CD8-positive, alpha-beta T cell (primary cell): ENCODE measurements at regions of chr2 and their contacts with region 1.

Region 1: GRCh38 chr2:43131024-43131889 is 95.1 kb downstream of the ZFP36L2 start:
- DNase-seq: peak; percentile 64 to 95 (median 90)
- ATAC-seq: peak; percentile 51
- H3K4me3 ChIP-seq: peak overlapping the region; percentile 12 to 44
- H3K4me3 Mint-ChIP-seq: peak overlapping the region; percentile 60
- H3K27ac ChIP-seq: peak overlapping the region; percentile 88 to 90
- H3K27ac Mint-ChIP-seq: peak overlapping the region; percentile 100
- H3K4me1 ChIP-seq: peaks cover 97% of the 10 kb centered on the region
- H3K4me1 Mint-ChIP-seq: peaks cover 89% of the 10 kb centered on the region
- H3K27me3 ChIP-seq: no peaks in the 10 kb centered on the region
- H3K27me3 Mint-ChIP-seq: no peaks in the 10 kb centered on the region
- CTCF ChIP-seq: peak; percentile 21

Region 2: GRCh38 chr2:42102024-42102590 is 1029.2 kb before region 1 on chr2:
- CTCF ChIA-PET with region 1: no interaction called
- POLR2A ChIA-PET with region 1: no interaction called
- intact Hi-C with region 1: loop called (anchors 10 kb)
- DNase-seq: peak; percentile 84 to 98 (median 92)
- ATAC-seq: peak; percentile 74
- H3K4me3 ChIP-seq: peak overlapping the region; percentile 49 to 53
- H3K4me3 Mint-ChIP-seq: peak overlapping the region; percentile 85
- H3K27ac ChIP-seq: peak overlapping the region; percentile 88 to 97
- H3K27ac Mint-ChIP-seq: no peak overlapping the region
- H3K4me1 ChIP-seq: peaks cover 90% of the 10 kb centered on the region
- H3K4me1 Mint-ChIP-seq: peaks cover 46% of the 10 kb centered on the region
- H3K27me3 ChIP-seq: no peaks in the 10 kb centered on the region
- H3K27me3 Mint-ChIP-seq: no peaks in the 10 kb centered on the region
- CTCF ChIP-seq: no peak

Region 3: GRCh38 chr2:42874949-42875801 is 256.1 kb before region 1 on chr2:
- CTCF ChIA-PET with region 1: no interaction called
- POLR2A ChIA-PET with region 1: no interaction called
- intact Hi-C with region 1: no loop called
- DNase-seq: peak in 1 of 9 experiments; percentile 29
- ATAC-seq: no peak
- H3K4me3 ChIP-seq: no peak overlapping the region
- H3K4me3 Mint-ChIP-seq: no peak overlapping the region
- H3K27ac ChIP-seq: no peak overlapping the region
- H3K27ac Mint-ChIP-seq: no peak overlapping the region
- H3K4me1 ChIP-seq: peaks cover 13% of the 10 kb centered on the region
- H3K4me1 Mint-ChIP-seq: peaks cover 19% of the 10 kb centered on the region
- H3K27me3 ChIP-seq: no peaks in the 10 kb centered on the region
- H3K27me3 Mint-ChIP-seq: no peaks in the 10 kb centered on the region
- CTCF ChIP-seq: no peak

Region 4: DNA sequence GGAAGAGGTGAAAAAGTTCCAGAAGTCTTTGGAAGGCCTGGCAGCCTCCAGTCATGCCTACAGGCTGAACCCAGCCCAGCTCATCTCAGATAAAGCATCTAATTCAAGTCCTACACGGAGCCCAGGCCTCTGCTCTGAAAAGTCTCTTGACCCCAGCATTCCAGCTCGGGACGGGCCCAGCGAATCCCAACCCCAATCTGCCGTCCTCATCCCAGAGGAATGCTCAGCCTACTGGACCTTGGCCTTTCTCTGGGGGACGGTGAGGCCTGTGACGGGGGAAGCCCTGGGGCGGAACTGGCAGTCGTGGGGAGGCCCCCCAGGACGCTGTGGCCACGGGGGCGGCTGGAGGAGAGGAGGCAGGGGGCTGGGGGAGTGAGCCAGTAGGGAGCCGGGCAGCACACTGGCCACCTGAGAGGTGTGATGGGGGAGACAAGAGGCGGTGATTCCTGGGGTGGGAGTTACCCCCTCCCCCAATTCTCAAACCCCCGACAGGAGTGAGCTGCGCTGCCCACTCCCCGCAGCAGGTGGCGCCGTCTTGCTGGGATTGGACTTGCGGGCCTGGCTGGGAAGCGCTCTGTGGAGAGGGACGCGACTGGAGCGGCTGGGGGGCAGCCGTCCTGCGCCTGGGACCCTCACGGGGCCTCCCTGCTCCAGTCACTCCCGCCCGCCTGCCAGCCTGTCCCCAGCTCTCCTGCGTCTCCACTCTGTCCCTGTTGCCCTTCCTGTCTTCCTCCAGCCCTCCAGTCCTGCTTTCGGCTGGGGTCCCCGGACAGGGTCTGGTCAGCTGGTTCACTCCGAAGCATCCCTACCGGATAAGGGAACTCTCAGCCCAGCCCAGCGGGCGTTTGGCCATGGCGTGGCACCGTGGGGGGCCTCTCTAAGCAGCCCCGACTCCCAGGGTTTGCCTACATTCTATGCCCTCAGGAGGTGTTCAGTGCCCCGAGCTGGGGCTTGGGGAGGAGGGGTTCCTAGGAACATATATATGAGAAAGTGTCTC is 156.2 kb before region 1 on chr2:
- CTCF ChIA-PET with region 1: interaction called, 12 read pairs
- POLR2A ChIA-PET with region 1: no interaction called
- intact Hi-C with region 1: loop called in 1 of 2 experiments (anchors 5 kb)
- DNase-seq: peak; percentile 27 to 79 (median 60)
- ATAC-seq: peak; percentile 78
- H3K4me3 ChIP-seq: no peak overlapping the region
- H3K4me3 Mint-ChIP-seq: no peak overlapping the region
- H3K27ac ChIP-seq: no peak overlapping the region
- H3K27ac Mint-ChIP-seq: no peak overlapping the region
- H3K4me1 ChIP-seq: peaks cover 8% of the 10 kb centered on the region
- H3K4me1 Mint-ChIP-seq: peaks cover 15% of the 10 kb centered on the region
- H3K27me3 ChIP-seq: no peaks in the 10 kb centered on the region
- H3K27me3 Mint-ChIP-seq: no peaks in the 10 kb centered on the region
- CTCF ChIP-seq: peak; percentile 71

Region 5: GRCh38 chr2:43003702-43004101 is 127.6 kb before region 1 on chr2:
- CTCF ChIA-PET with region 1: no interaction called
- POLR2A ChIA-PET with region 1: no interaction called
- intact Hi-C with region 1: no loop called
- DNase-seq: no peak
- ATAC-seq: no peak
- H3K4me3 ChIP-seq: no peak overlapping the region
- H3K4me3 Mint-ChIP-seq: no peak overlapping the region
- H3K27ac ChIP-seq: no peak overlapping the region
- H3K27ac Mint-ChIP-seq: no peak overlapping the region
- H3K4me1 ChIP-seq: no peaks in the 10 kb centered on the region
- H3K4me1 Mint-ChIP-seq: no peaks in the 10 kb centered on the region
- H3K27me3 ChIP-seq: no peaks in the 10 kb centered on the region
- H3K27me3 Mint-ChIP-seq: peaks cover 2% of the 10 kb centered on the region
- CTCF ChIP-seq: no peak

Region 6: DNA sequence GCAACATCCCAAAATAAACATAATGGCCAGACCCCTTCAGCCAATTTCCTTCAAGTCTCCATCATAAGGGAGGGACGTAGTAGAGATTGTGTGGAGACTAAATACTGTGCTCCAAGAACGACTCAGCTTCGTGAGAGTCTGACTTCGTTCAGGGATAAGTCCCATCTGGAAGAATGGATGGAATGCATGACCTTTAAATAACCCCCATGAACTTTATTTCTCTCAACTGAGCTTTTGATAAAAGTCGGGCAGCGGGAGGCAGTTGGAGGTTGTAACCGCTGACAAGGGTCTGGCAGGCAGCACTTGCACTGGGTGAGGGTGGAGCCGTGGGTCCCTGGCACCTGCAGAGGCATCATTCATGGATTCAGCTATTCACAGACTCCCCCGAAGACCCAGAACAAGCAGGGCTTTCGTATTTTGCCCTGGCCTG is 20.8 kb before region 1 on chr2:
- CTCF ChIA-PET with region 1: interaction called, 12 read pairs
- POLR2A ChIA-PET with region 1: interaction called, 3 read pairs
- intact Hi-C with region 1: no loop called
- DNase-seq: no peak
- ATAC-seq: no peak
- H3K4me3 ChIP-seq: no peak overlapping the region
- H3K4me3 Mint-ChIP-seq: no peak overlapping the region
- H3K27ac ChIP-seq: no peak overlapping the region
- H3K27ac Mint-ChIP-seq: no peak overlapping the region
- H3K4me1 ChIP-seq: peaks cover 4% of the 10 kb centered on the region
- H3K4me1 Mint-ChIP-seq: peaks cover 37% of the 10 kb centered on the region
- H3K27me3 ChIP-seq: no peaks in the 10 kb centered on the region
- H3K27me3 Mint-ChIP-seq: no peaks in the 10 kb centered on the region
- CTCF ChIP-seq: no peak

Region 7: GRCh38 chr2:43169987-43170386 is 38.7 kb after region 1 on chr2:
- CTCF ChIA-PET with region 1: interaction called, 77 read pairs
- POLR2A ChIA-PET with region 1: interaction called, 245 read pairs
- intact Hi-C with region 1: loop called (anchors 1 to 2 kb)
- DNase-seq: peak; percentile 54 to 86 (median 72)
- ATAC-seq: peak; percentile 15
- H3K4me3 ChIP-seq: peak overlapping the region; percentile 27 to 32
- H3K4me3 Mint-ChIP-seq: peak overlapping the region; percentile 86
- H3K27ac ChIP-seq: peak overlapping the region; percentile 47 to 67
- H3K27ac Mint-ChIP-seq: peak overlapping the region; percentile 99
- H3K4me1 ChIP-seq: peaks cover 70% of the 10 kb centered on the region
- H3K4me1 Mint-ChIP-seq: peaks cover 82% of the 10 kb centered on the region
- H3K27me3 ChIP-seq: no peaks in the 10 kb centered on the region
- H3K27me3 Mint-ChIP-seq: no peaks in the 10 kb centered on the region
- CTCF ChIP-seq: peak; percentile 59

Region 8: DNA sequence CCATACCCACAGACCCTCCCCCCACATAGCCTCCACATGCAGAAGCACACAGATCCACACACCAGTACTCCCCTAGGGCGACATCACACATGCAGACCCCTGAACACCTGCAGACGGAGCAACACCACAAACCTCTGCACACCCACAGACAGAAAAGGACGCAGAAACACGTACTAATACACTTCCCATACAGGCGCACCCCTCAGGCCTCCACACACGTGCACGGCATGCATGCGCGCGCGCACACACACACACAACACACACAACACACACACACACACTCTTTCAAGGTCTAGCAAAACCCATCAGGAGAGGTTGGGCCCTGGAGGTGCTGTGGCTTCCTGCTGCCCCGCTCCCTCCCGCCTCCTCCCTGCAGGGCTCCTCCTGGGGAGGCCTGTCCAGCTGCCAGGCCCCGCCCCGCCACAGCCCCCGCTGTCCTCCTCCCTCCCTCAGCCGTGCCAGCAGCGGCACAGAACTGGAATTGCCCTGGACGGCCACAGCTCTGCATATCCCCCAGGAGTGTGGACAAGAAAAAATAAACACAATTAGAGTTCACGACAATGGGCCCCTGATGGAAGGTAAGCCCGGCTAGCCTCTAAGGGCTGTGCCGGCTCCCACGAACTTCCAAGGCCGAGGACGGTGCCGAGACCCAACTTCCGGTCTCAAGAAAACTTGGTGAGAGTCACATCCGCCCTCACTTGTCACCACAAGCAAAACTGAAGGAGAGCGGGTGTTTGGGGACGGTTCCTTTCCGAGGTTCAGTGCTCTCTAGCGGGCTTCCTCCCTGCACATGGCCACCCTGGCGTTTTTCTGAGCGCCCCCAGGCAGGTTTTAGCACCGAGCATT is 88.3 kb after region 1 on chr2:
- CTCF ChIA-PET with region 1: interaction called, 666 read pairs
- POLR2A ChIA-PET with region 1: interaction called, 1,192 read pairs
- intact Hi-C with region 1: loop called (anchors 1 kb)
- DNase-seq: peak; percentile 59 to 95 (median 82)
- ATAC-seq: peak; percentile 41
- H3K4me3 ChIP-seq: peak overlapping the region; percentile 89 to 94
- H3K4me3 Mint-ChIP-seq: peak overlapping the region; percentile 94
- H3K27ac ChIP-seq: peak overlapping the region; percentile 76 to 86
- H3K27ac Mint-ChIP-seq: peak overlapping the region; percentile 99
- H3K4me1 ChIP-seq: peaks cover 33% of the 10 kb centered on the region
- H3K4me1 Mint-ChIP-seq: peaks cover 49% of the 10 kb centered on the region
- H3K27me3 ChIP-seq: no peaks in the 10 kb centered on the region
- H3K27me3 Mint-ChIP-seq: no peaks in the 10 kb centered on the region
- CTCF ChIP-seq: no peak

Region 9: GRCh38 chr2:43595603-43596412 is 464.6 kb after region 1 on chr2 and contains the start of gene THADA:
- CTCF ChIA-PET with region 1: no interaction called
- POLR2A ChIA-PET with region 1: no interaction called
- intact Hi-C with region 1: loop called in 1 of 2 experiments (anchors 5 kb)
- DNase-seq: peak; percentile 91 to 98 (median 96)
- ATAC-seq: peak; percentile 91
- H3K4me3 ChIP-seq: peak within 1 kb of the TSS; percentile 74 to 90
- H3K4me3 Mint-ChIP-seq: peak within 1 kb of the TSS; percentile 92
- H3K27ac ChIP-seq: peak within 1 kb of the TSS; percentile 86 to 87
- H3K27ac Mint-ChIP-seq: peak within 1 kb of the TSS; percentile 97
- H3K4me1 ChIP-seq: peaks cover 10% of the 10 kb centered on the region
- H3K4me1 Mint-ChIP-seq: peaks cover 33% of the 10 kb centered on the region
- H3K27me3 ChIP-seq: no peaks in the 10 kb centered on the region
- H3K27me3 Mint-ChIP-seq: no peaks in the 10 kb centered on the region
- CTCF ChIP-seq: no peak
- total RNA-seq, gene THADA: 28.5 to 28.6 TPM